ENCODE measurements at regions of chr19 and their contacts with region 1.

Region 1: GRCh38 chr19:49705919-49706318 is 15.0 kb downstream of the CPT1C start:
- DNase-seq: no peak
- H3K4me3 ChIP-seq: no peak overlapping the region
- H3K27ac ChIP-seq: no peak overlapping the region
- H3K4me1 ChIP-seq: no peaks in the 10 kb centered on the region
- H3K27me3 ChIP-seq: no peaks in the 10 kb centered on the region
- CTCF ChIP-seq: no peak
- POLR2A ChIP-seq: no peak

Region 2: GRCh38 chr19:49716154-49716553 is 10.2 kb after region 1 on chr19:
- intact Hi-C with region 1: no loop called
- DNase-seq: no peak
- H3K4me3 ChIP-seq: no peak overlapping the region
- H3K27ac ChIP-seq: no peak overlapping the region
- H3K4me1 ChIP-seq: no peaks in the 10 kb centered on the region
- H3K27me3 ChIP-seq: no peaks in the 10 kb centered on the region
- CTCF ChIP-seq: no peak
- POLR2A ChIP-seq: no peak

Region 3: DNA sequence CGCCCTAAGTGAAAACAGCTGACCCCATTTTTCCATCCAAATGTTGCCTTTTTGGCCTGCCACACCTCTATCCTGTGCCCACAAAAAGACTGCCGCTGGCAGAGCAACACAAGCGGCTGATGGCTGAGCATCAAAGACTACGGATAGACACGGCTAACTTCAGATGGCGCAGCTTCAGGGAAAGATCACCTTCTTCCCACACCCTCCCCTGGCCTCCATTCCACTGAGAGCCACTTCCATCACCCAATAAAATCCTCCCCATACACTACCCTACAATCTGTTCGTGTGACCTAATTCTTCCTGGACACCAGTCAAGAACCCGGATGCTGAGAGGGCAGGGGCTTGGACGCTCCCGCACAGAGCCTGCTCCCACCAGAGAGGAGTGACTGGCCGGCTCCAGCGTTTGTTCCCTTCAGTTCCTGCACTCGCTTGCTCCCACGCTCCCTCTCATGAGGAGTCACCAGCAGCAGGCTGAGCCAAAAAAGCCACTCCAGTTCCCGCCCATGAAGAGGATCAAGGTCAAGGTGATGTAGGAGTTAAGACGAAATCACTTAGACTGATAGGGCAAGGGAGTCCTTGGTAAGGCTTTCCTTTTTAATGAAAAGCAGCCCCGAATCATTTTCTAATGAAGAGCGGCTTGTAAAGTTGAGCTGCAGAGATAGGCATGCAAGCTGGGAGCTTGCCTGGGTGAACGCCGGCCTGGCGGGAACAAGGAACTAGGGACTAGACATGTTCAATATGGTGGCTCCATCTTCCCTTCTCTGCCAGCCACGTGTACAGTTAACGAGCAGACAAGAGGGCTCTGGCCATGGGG is 21.5 kb after region 1 on chr19:
- intact Hi-C with region 1: loop called (anchors 2 kb)
- DNase-seq: no peak
- H3K4me3 ChIP-seq: peak overlapping the region in 1 of 3 donors; percentile 39
- H3K27ac ChIP-seq: peak overlapping the region in 1 of 2 donors; percentile 83
- H3K4me1 ChIP-seq: no peaks in the 10 kb centered on the region
- H3K27me3 ChIP-seq: no peaks in the 10 kb centered on the region
- CTCF ChIP-seq: no peak
- POLR2A ChIP-seq: no peak

Measured in breast epithelium (tissue), 4 donors.